Heart left ventricle (tissue), 16 donors: ENCODE measurements at regions of chr11 and their contacts with region 1.

Region 1: GRCh38 chr11:111123463-111124398 is 121.8 kb upstream of the POU2AF2 start:
- DNase-seq: peak in 1 of 5 donors; percentile 38
- ATAC-seq: peak in 2 of 4 donors; percentile 58 to 64
- H3K4me3 ChIP-seq: no peak overlapping the region
- H3K27ac ChIP-seq: no peak overlapping the region
- H3K4me1 ChIP-seq: no peaks in the 10 kb centered on the region
- H3K27me3 ChIP-seq: no peaks in the 10 kb centered on the region
- CTCF ChIP-seq: no peak
- POLR2A ChIP-seq: no peak

Region 2: DNA sequence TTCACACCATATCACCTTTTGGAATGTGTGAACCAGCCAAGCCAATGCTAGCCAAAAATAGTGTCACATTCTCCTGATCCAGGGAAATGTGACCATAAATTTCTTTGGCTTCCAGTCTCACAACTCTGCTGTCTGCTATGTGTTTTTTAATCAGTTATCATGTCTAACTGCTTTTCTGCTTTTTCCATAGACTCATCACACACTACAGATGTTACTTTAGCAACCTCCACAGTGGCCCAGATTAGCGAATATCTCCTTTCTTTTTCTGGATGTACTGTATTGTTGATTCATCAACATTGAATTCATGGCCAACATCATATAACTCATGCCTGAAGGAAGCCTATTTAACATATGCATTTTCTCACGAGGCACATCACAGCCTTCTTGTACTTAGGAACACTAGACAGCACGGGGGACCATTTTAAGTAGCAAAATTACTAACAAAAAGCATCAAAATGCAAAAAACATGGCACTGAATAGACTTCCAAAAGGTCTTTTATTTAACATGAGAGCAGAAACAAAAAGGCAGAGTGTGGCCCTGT is 48.7 kb after region 1 on chr11:
- intact Hi-C with region 1: no loop called
- DNase-seq: no peak
- ATAC-seq: no peak
- H3K4me3 ChIP-seq: no peak overlapping the region
- H3K27ac ChIP-seq: no peak overlapping the region
- H3K4me1 ChIP-seq: peaks cover 0 to 7% (median 0%) of the 10 kb centered on the region in 12 donors
- H3K27me3 ChIP-seq: no peaks in the 10 kb centered on the region
- CTCF ChIP-seq: no peak
- POLR2A ChIP-seq: no peak

Region 3: GRCh38 chr11:111185266-111185665 is 61.5 kb after region 1 on chr11:
- intact Hi-C with region 1: loop called in 1 of 10 experiments (anchors 10 kb)
- DNase-seq: no peak
- ATAC-seq: no peak
- H3K4me3 ChIP-seq: no peak overlapping the region
- H3K27ac ChIP-seq: no peak overlapping the region
- H3K4me1 ChIP-seq: peaks cover 0 to 6% (median 0%) of the 10 kb centered on the region in 12 donors
- H3K27me3 ChIP-seq: peaks cover 0 to 8% (median 0%) of the 10 kb centered on the region in 9 donors
- CTCF ChIP-seq: no peak
- POLR2A ChIP-seq: no peak

Region 4: DNA sequence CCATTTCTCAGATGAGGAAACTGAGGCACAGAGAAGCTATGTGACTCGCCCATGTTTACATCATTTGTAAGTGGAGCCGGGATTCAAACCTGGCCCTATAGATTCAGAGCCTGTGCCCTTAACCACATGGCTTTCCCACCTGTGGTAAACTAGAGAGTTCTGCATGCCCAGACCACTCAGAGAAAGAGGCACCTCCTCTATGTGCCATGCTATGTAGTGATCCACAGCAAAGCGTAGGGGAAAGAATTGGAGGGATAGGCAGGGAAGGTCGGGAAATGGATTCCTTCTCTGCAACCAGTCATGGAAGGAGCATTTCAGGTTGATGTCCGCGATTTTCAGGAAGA is 106.4 kb after region 1 on chr11:
- intact Hi-C with region 1: no loop called
- DNase-seq: no peak
- ATAC-seq: peak; percentile 26 to 58 (median 38)
- H3K4me3 ChIP-seq: peak overlapping the region in 9 of 12 donors; percentile 39 to 64 (median 52)
- H3K27ac ChIP-seq: no peak overlapping the region
- H3K4me1 ChIP-seq: peaks cover 0 to 5% (median 0%) of the 10 kb centered on the region in 12 donors
- H3K27me3 ChIP-seq: peaks cover 0 to 7% (median 0%) of the 10 kb centered on the region in 9 donors
- CTCF ChIP-seq: no peak
- POLR2A ChIP-seq: no peak